RWPE1 (cell line): ENCODE measurements at regions of chr16 and their contacts with region 1.

Region 1: DNA sequence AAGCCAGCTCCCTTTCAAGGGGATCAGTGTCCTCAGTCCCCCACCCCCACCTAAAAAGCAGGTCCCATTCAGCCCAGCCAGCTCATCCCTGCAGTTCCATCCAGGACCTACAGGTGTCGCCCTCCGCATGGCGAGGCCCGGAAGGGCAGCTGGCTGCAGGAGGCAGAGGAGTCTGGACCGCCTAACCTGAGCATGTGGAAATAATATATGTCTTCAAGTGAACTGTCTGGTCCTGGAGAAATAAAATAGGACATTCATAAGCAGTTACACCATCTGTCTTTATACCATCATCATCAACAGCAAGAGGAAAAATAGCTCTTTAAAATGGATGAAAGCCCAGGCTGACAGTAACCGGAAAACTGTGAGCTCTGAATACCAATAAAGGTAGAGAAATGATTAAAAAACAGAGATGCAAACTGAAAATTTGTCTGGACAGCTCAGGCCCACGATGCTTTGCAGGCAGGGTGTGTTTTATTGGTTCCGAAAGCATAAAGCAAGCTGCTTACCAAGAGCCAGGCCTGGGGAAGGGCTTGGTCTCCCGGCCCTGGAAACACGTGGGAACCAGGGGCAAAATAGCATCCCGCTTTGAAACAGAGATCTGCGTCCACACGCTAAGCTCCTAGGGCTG is 215.2 kb downstream of the ZFHX3 start:
- DNase-seq: peak; percentile 81
- H3K27ac ChIP-seq: peak overlapping the region; percentile 65
- CTCF ChIP-seq: peak; percentile 99

Region 2: DNA sequence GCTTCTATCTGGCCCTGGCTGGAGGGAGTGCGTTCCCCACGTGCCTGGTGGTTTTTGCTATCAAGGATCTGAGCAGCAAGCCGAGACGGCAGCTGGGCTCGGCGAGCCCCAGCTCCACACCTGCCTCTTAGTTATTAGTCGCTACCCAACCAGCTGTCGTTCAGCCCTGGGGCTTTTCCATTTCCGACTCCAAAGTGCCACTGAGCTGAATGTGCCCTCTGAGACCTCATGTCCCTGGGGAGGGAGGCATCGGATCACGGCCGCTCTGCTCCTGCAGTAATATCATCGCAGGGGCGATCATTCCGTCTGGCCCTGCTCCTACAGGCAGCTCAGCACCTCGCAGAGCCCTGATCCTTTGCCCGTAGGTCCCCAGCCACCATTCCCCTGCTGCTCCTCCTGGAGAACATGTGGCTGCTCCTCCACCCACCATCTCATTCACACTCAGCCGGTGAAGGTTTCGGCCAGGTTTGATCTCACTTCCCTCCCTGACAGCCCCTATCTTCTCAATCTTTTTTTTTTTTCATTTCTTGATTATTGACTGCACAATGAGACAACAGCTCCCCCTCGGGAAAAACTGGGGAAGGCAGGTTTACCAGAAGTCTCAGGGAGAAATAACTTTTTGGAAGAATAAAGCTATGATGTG is 128.5 kb after region 1 on chr16:
- CTCF ChIA-PET with region 1: interaction called, 22 read pairs
- POLR2A ChIA-PET with region 1: no interaction called
- DNase-seq: peak; percentile 19
- H3K27ac ChIP-seq: 0 out of 2 replicates have a peak overlapping the region, but pooled peaks have one; percentile 10
- CTCF ChIP-seq: peak; percentile 13; the same call in 1 of the 2 replicates

Region 3: DNA sequence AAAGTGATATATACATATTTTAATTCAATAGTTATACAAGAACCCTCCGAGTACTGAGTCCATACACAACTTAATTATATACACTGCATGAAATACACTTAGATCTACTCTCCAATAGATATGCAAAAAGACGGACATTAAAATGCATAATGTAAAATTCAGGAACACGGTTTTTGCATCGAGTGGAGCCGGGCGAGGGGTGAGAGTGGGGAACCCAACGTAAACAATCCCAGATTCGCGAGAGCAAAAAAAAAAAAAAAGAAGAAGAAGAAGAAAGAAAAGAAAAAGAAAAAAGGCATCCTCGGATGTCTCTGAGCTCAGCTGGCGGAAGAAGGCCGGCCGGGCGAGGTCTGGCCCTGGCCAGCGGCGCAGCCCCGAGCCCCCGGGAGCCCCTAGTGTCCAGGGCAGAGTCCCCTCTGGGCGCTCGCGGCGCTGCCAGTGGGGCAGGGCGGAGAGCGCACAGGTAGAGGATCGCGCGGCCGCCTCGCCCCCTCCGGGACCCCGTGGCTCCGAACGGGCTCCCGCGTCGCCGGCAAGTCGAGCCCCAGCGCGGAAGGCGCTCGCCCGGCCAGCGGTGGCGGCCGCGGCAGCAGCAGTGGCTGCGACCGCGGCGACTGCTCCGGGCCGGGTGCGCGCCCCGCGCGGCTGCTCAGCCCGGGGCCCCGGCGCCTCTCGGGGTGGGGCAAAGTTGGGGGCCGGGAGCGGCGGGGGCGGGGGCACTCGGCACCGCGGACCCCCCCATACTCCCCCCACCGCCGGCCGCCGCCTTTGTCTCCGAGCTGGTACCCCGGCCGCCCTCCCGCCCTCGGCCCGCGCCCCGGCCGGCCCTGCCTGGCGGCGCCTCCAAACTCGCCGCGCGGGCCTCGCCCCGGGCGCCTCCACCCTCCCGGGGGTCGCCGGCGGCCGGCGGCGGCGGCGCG is 224.8 kb after region 1 on chr16:
- CTCF ChIA-PET with region 1: interaction called, 16 read pairs
- POLR2A ChIA-PET with region 1: no interaction called
- DNase-seq: no peak
- H3K27ac ChIP-seq: peak overlapping the region; percentile 95
- CTCF ChIP-seq: peak; percentile 34